Common myeloid progenitor, CD34-positive (primary cell): ENCODE measurements at regions of chr9 and their contacts with region 1.

Region 1: GRCh38 chr9:132412089-132412488 is 2.1 kb downstream of the CFAP77 start:
- DNase-seq: peak; percentile 42 to 61 (median 60)
- H3K4me3 ChIP-seq: no peak overlapping the region
- H3K27ac ChIP-seq: no peak overlapping the region
- H3K4me1 ChIP-seq: peaks cover 0 to 27% (median 22%) of the 10 kb centered on the region in 4 experiments
- H3K27me3 ChIP-seq: peaks cover 14 to 75% (median 29%) of the 10 kb centered on the region in 5 experiments

Region 2: DNA sequence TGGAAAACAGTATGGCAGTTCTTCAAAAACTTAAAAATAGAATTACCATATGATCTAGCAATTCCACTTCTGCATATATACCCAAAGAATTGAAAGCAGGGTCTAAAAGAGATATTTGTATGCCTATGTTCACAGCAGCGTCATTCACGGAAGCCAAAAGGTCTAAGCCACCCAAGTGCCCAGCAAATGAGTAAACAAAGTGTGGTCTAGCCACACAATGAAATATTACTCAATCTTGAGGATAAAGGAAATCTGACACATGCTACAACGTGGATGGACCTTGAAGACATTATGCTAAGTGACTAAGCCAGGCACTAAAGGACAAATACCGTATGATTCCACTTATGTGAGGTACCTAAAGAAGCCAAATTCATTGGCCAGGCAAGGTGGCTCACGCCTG is 321.3 kb before region 1 on chr9:
- CTCF ChIA-PET with region 1: no interaction called
- POLR2A ChIA-PET with region 1: no interaction called
- DNase-seq: no peak
- H3K4me3 ChIP-seq: no peak overlapping the region
- H3K27ac ChIP-seq: no peak overlapping the region
- H3K4me1 ChIP-seq: no peaks in the 10 kb centered on the region
- H3K27me3 ChIP-seq: peaks cover 0 to 15% (median 4%) of the 10 kb centered on the region in 5 experiments

Region 3: DNA sequence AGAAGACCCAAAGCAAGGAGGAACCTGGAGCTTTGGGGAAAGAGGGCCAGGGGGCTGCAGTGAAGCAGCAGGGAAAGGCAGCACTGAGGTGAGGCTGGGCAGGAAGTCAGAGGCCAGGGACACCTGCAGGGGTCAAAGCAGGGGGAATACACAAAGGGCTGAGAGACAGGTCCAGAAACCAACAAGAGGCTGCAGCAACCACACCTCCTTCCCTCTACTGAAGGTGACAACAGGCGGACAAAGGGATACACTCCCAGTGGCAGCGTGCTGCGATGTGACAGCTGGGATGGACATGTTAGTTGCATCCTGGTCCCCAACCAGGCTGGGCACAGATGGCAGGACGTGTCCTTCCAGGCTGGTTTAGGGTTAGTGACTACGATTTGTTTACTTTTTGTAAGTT is 10.5 kb after region 1 on chr9:
- CTCF ChIA-PET with region 1: interaction called, 14 read pairs
- POLR2A ChIA-PET with region 1: interaction called, 3 read pairs
- DNase-seq: no peak
- H3K4me3 ChIP-seq: no peak overlapping the region
- H3K27ac ChIP-seq: no peak overlapping the region
- H3K4me1 ChIP-seq: no peaks in the 10 kb centered on the region
- H3K27me3 ChIP-seq: peaks cover 10 to 74% (median 28%) of the 10 kb centered on the region in 5 experiments